Activated B cell treated with CpG ODN at 0.5 μM for 24 hours (primary cell): ENCODE measurements at regions of chr15 and their contacts with region 1.

Region 1: GRCh38 chr15:67521029-67521811 is at the start of gene C15orf61:
- DNase-seq: peak; percentile 88
- ATAC-seq: peak; percentile 81
- H3K4me3 Mint-ChIP-seq: peak within 1 kb of the TSS; percentile 93
- H3K27ac Mint-ChIP-seq: peak within 1 kb of the TSS; percentile 92
- H3K4me1 Mint-ChIP-seq: peaks cover 22% of the 10 kb centered on the region
- H3K27me3 Mint-ChIP-seq: no peaks in the 10 kb centered on the region
- CTCF ChIP-seq: no peak
- total RNA-seq, gene C15orf61: 3.3 and 4.2 TPM in 2 replicates

Region 2: GRCh38 chr15:68229386-68230156 is 708.4 kb after region 1 on chr15 and contains the start of gene CLN6:
- CTCF ChIA-PET with region 1: no interaction called
- POLR2A ChIA-PET with region 1: no interaction called
- intact Hi-C with region 1: loop called (anchors 2 kb)
- DNase-seq: peak; percentile 85
- ATAC-seq: peak; percentile 88
- H3K4me3 Mint-ChIP-seq: peak within 1 kb of the TSS; percentile 92
- H3K27ac Mint-ChIP-seq: peak within 1 kb of the TSS; percentile 89
- H3K4me1 Mint-ChIP-seq: peaks cover 50% of the 10 kb centered on the region
- H3K27me3 Mint-ChIP-seq: no peaks in the 10 kb centered on the region
- CTCF ChIP-seq: no peak
- total RNA-seq, gene CLN6: 35.0 and 37.5 TPM in 2 replicates